WTC11 (cell line): ENCODE measurements at regions of chr7 and their contacts with region 1.

Region 1: DNA sequence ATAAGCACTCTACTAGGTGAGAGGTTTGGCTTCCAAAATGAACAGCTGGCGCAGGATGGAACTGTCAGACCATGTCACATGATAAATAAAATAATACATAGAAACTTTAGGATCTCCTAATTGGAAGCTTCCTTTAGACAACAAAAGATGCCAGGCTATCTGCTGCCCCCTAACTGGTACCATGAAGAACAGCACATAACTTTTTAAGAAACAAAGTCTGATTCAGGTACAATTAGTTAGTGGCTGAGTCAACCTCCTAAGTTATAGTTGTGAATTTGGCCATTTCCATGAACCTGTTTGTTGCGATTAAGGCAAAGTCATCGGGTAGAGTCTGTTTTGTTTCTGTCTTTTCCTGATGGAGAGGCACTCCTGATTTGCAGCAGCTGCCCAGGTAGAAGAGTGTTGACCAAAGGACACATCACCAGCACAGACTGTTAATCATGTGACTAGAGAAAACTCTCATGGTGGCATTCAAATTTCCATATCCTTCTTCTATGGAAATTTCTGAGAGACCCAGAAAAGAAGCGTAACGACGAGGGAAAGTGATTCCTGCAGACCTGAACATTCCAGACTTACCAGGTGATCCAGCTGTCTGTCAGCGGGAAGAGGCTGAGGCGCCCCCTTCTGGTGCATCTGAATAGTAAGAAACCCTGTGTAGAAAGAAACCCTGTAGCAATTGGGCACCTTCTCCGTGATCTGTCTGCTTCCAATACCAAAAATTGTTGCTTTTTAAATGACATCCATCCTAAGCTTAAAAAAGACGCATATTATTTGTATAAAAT is 8.6 kb upstream of the INHBA start:
- DNase-seq: peak; percentile 73
- ATAC-seq: peak; percentile 92
- H3K4me3 Mint-ChIP-seq: peak overlapping the region; percentile 29
- H3K27ac Mint-ChIP-seq: no peak overlapping the region
- H3K4me1 Mint-ChIP-seq: peaks cover 9% of the 10 kb centered on the region
- H3K27me3 Mint-ChIP-seq: peaks cover 12% of the 10 kb centered on the region
- CTCF ChIP-seq: peak; percentile 46

Region 2: GRCh38 chr7:41003031-41003925 is 708.2 kb before region 1 on chr7:
- CTCF ChIA-PET with region 1: interaction called, 20 read pairs
- POLR2A ChIA-PET with region 1: no interaction called
- DNase-seq: peak; percentile 83
- ATAC-seq: peak; percentile 62
- H3K4me3 Mint-ChIP-seq: no peak overlapping the region
- H3K27ac Mint-ChIP-seq: no peak overlapping the region
- H3K4me1 Mint-ChIP-seq: peaks cover 11% of the 10 kb centered on the region; the same call in 1 of the 2 replicates
- H3K27me3 Mint-ChIP-seq: no peaks in the 10 kb centered on the region; the same call in 1 of the 2 replicates
- CTCF ChIP-seq: peak; percentile 85

Region 3: GRCh38 chr7:41315764-41316163 is 395.7 kb before region 1 on chr7:
- CTCF ChIA-PET with region 1: interaction called, 31 read pairs
- POLR2A ChIA-PET with region 1: no interaction called
- DNase-seq: peak; percentile 77
- ATAC-seq: peak; percentile 98
- H3K4me3 Mint-ChIP-seq: no peak overlapping the region
- H3K27ac Mint-ChIP-seq: no peak overlapping the region
- H3K4me1 Mint-ChIP-seq: peaks cover 23% of the 10 kb centered on the region
- H3K27me3 Mint-ChIP-seq: no peaks in the 10 kb centered on the region
- CTCF ChIP-seq: peak; percentile 58

Region 4: DNA sequence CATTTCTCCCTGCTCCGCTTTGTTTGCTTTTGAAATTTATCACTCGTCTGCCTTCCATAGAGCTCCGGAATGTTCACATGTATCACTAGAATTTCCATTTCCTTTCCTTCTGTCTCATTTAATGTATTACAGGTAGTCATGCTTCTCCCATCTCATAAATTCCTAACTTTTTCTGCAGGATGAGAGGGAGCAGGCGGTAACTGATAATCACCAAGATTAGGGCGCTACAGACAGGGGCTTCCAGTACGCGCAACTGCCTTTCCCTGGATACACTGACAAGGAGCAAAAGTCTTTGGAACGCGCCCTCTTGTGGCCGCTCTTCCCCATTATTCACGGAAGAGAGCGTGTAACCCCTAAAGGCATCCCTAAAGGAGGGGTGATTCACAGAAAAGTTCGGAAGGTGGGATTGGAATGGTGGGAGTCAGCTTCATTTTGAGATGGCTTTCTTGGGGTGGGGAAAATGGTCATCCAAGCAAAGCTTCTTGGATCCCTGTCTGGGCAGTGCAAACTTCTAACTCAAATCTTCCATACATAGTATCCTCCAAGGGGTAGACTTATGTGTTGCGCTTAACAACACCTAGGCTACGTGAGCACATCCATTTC is 15.1 kb before region 1 on chr7:
- CTCF ChIA-PET with region 1: interaction called, 16 read pairs
- POLR2A ChIA-PET with region 1: no interaction called
- DNase-seq: peak; percentile 84
- ATAC-seq: peak; percentile 68
- H3K4me3 Mint-ChIP-seq: no peak overlapping the region
- H3K27ac Mint-ChIP-seq: peak overlapping the region; percentile 40; the same call in 1 of the 2 replicates
- H3K4me1 Mint-ChIP-seq: peaks cover 67% of the 10 kb centered on the region
- H3K27me3 Mint-ChIP-seq: peaks cover 18% of the 10 kb centered on the region
- CTCF ChIP-seq: peak; percentile 70